T-cell (primary cell): ENCODE measurements at regions of chr12 and their contacts with region 1.

Region 1: GRCh38 chr12:30774599-30774998 is 19.8 kb upstream of the CAPRIN2 start:
- DNase-seq: no peak
- ATAC-seq: no peak
- H3K4me3 ChIP-seq: no peak overlapping the region
- H3K4me3 Mint-ChIP-seq: no peak overlapping the region
- H3K27ac ChIP-seq: no peak overlapping the region
- H3K27ac Mint-ChIP-seq: no peak overlapping the region
- H3K4me1 ChIP-seq: no peaks in the 10 kb centered on the region
- H3K4me1 Mint-ChIP-seq: no peaks in the 10 kb centered on the region
- H3K27me3 ChIP-seq: peaks cover 0 to 3% of the 10 kb centered on the region in 2 experiments
- H3K27me3 Mint-ChIP-seq: peaks cover 9 to 11% of the 10 kb centered on the region in 2 donors

Region 2: DNA sequence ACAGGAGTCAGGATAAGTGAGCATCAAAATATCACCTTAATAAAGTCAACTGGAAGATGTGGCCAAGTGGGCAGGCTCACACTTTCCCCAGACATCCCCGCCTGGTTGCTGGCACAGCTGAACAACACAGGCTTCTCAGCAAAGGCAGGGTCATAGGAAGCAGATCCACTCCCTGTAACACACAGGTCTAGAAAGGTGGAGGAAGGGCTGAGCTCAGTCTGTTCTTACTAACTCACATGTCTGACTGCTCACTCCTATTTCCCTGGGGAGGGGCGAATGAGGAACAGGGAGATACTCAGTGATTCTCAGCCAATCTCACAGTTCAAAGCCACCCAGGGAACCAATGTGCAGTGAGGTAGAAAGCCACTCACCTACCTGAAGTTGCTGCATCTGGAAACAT is 999.3 kb after region 1 on chr12:
- CTCF ChIA-PET with region 1: interaction called in 1 of 2 experiments, 12 read pairs
- POLR2A ChIA-PET with region 1: no interaction called
- DNase-seq: no peak
- ATAC-seq: peak in 3 of 4 experiments; percentile 52 to 60 (median 54)
- H3K4me3 ChIP-seq: no peak overlapping the region
- H3K4me3 Mint-ChIP-seq: no peak overlapping the region
- H3K27ac ChIP-seq: no peak overlapping the region
- H3K27ac Mint-ChIP-seq: peak overlapping the region; percentile 80 to 85
- H3K4me1 ChIP-seq: peaks cover 7 to 10% of the 10 kb centered on the region in 2 experiments
- H3K4me1 Mint-ChIP-seq: peaks cover 14 to 28% (median 21%) of the 10 kb centered on the region in 3 donors
- H3K27me3 ChIP-seq: no peaks in the 10 kb centered on the region
- H3K27me3 Mint-ChIP-seq: no peaks in the 10 kb centered on the region